Sigmoid colon (tissue), 7 donors: ENCODE measurements at regions of chr6 and their contacts with region 1.

Region 1: DNA sequence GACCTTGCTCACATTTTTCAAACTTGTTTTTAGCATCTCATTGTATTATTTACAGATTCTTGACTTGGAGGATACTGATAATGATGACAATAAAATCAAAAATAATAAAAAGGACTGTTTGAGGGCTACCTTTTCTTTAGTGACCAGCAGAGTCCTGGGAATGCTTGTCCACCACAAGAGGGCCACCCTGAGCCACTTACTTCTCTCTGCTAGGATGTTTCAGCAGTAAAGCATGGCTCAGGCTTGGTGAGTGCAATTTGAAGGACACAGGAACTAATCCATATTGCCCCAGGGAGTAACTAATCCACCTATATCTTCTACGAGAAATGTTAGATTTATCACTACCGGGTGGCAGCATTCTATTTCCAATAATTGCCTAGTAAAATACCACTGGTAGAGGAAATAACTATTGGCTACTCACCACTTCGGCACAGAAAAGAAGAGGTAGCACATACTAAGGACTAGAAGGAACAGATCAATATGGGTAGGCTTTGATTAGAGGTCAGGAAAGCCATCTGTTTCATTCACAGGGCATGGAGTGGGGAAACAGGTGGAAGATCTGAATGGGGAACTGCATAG is 5.8 kb upstream of the KIAA0408 start:
- DNase-seq: peak; percentile 88
- H3K4me3 ChIP-seq: no peak overlapping the region
- H3K27ac ChIP-seq: peak overlapping the region; percentile 58 to 77 (median 72)
- H3K4me1 ChIP-seq: peaks cover 0 to 52% (median 33%) of the 10 kb centered on the region in 4 donors
- H3K27me3 ChIP-seq: no peaks in the 10 kb centered on the region
- CTCF ChIP-seq: peak; percentile 39 to 83 (median 66)
- EP300 ChIP-seq: no peak
- POLR2A ChIP-seq: no peak

Region 2: GRCh38 chr6:127302728-127303660 is 162.0 kb before region 1 on chr6:
- intact Hi-C with region 1: loop called (anchors 2 kb)
- DNase-seq: no peak
- H3K4me3 ChIP-seq: no peak overlapping the region
- H3K27ac ChIP-seq: no peak overlapping the region
- H3K4me1 ChIP-seq: peaks cover 0 to 50% (median 42%) of the 10 kb centered on the region in 4 donors
- H3K27me3 ChIP-seq: no peaks in the 10 kb centered on the region
- CTCF ChIP-seq: peak; percentile 62 to 70 (median 66)
- EP300 ChIP-seq: no peak
- POLR2A ChIP-seq: no peak

Region 3: DNA sequence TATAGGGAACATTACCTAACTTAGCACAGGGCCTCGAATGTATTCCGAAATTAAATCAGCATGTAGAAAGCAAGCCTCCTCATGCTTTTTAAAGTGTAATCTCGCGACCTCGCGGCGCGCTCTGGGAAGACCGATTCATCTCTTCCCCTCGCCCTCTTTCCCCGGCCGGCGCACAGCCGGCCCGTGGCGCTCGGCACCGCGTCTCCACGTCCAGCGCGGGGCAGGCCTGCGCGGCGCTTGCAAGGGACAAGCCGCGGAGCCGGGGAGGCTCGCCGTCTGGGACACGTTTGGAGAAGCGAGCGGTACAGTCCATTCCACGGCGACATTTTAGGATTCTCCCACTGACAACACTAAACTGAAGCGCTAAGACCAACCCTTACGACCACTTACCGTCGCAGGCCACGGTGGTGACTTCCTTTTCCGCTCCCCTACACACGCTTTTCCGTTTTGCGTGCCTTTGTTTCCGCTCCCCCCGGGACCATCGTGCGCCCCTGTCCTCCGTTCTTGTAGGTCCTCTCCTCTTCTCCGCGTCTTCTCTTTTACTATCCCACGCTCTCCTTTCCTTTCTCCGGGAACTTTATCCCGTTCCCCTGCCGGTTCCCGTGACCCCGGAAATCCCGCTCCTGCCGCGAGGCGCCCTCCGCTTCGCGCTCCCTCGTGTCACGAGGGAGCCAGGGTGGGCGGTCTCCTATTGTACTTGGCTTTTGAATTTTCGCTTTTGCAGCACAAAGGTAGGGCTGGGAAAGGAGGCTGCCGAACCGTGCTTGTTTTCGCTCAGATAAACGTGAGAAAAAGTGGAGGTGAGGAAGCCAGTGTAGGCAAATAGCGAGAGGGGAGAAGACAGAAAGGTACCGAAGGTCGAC is 121.8 kb before region 1 on chr6 and contains the start of gene ECHDC1:
- intact Hi-C with region 1: loop called (anchors 2 kb)
- DNase-seq: peak; percentile 79
- H3K4me3 ChIP-seq: peak within 1 kb of the TSS; percentile 63 to 83 (median 76)
- H3K27ac ChIP-seq: peak within 1 kb of the TSS; percentile 83 to 91 (median 87)
- H3K4me1 ChIP-seq: peaks cover 0 to 48% (median 44%) of the 10 kb centered on the region in 4 donors
- H3K27me3 ChIP-seq: no peaks in the 10 kb centered on the region
- CTCF ChIP-seq: no peak
- EP300 ChIP-seq: no peak
- POLR2A ChIP-seq: no peak
- total RNA-seq, gene ECHDC1: 77.3 to 97.1 (median 83.5) TPM

Region 4: DNA sequence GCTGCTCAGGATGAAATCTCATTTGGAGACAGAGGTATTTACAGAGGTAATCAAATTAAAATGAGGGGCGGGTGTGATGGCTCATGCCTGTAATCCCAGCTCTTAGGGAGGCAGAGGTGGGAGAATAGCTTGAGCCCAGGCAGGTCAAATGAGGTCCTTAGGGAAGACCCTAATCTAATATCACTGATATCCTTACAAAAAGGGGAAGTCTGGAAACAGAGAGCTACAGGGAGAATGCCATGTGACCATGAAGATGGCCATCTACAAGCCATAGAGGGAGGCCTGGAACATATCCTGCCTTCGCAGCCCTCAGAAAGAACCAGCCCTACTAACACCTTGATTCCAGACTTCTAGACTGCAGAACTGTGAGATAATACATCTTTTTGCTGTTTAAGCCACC is 45.9 kb after region 1 on chr6:
- intact Hi-C with region 1: no loop called
- DNase-seq: no peak
- H3K4me3 ChIP-seq: no peak overlapping the region
- H3K27ac ChIP-seq: no peak overlapping the region
- H3K4me1 ChIP-seq: peaks cover 0 to 17% (median 13%) of the 10 kb centered on the region in 4 donors
- H3K27me3 ChIP-seq: peaks cover 0 to 9% (median 0%) of the 10 kb centered on the region in 3 donors
- CTCF ChIP-seq: no peak
- EP300 ChIP-seq: no peak
- POLR2A ChIP-seq: no peak

Region 5: DNA sequence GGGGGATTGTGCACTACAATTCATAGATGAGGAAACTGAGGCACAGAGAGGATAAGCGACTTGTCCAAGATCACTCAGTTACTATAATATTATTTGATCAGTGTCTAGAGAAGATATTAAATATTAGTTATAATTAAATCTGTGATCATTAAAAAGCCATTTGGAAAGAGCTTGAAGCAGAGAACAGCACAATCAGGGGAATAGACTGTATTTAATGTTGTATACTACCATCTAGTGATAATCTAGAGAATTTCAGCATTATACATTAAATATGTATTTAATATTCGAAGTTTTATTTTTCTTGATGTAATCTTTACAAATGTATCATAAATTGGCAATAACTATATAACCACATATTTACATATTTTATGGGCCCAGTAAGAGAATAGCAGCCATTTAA is 74.3 kb after region 1 on chr6:
- intact Hi-C with region 1: loop called (anchors 1 kb)
- DNase-seq: no peak
- H3K4me3 ChIP-seq: no peak overlapping the region
- H3K27ac ChIP-seq: no peak overlapping the region
- H3K4me1 ChIP-seq: no peaks in the 10 kb centered on the region
- H3K27me3 ChIP-seq: no peaks in the 10 kb centered on the region
- CTCF ChIP-seq: peak in 3 of 4 experiments; percentile 19 to 46 (median 31)
- EP300 ChIP-seq: no peak
- POLR2A ChIP-seq: no peak

Region 6: GRCh38 chr6:127886603-127887002 is 421.6 kb after region 1 on chr6:
- intact Hi-C with region 1: no loop called
- DNase-seq: no peak
- H3K4me3 ChIP-seq: no peak overlapping the region
- H3K27ac ChIP-seq: no peak overlapping the region
- H3K4me1 ChIP-seq: no peaks in the 10 kb centered on the region
- H3K27me3 ChIP-seq: no peaks in the 10 kb centered on the region
- CTCF ChIP-seq: no peak
- EP300 ChIP-seq: no peak
- POLR2A ChIP-seq: no peak